Heart right ventricle (tissue), 16 donors: ENCODE measurements at regions of chr16 and their contacts with region 1.

Region 1: DNA sequence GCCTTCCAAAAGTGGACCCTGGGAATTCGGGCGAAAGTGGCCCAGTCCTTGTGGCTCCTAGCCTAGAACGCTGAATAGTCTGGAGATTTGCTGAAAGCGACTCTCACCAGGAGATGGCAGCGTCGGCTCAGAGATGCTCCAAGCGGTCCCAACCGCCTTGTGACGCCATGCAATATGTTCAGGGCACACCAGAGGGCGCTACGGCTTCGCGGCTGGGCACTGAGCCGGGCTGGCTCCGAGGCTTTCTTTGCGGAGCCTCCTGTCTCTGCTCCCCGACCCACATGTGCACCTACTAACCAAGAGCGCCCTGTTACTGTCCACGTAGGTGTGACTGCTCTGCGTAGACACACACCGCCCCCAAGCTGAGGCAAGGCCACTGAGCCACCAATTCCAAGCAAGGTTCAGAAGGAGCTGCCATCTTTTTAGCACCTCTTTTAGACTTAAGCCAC is 36.9 kb downstream of the SYCE1L start:
- DNase-seq: peak; percentile 84 to 85
- ATAC-seq: peak; percentile 93 to 98 (median 98)
- H3K4me3 ChIP-seq: peak overlapping the region in 1 of 10 donors; percentile 14
- H3K27ac ChIP-seq: no peak overlapping the region
- H3K4me1 ChIP-seq: peaks cover 0 to 4% (median 0%) of the 10 kb centered on the region in 9 donors
- H3K27me3 ChIP-seq: peaks cover 0 to 12% (median 9%) of the 10 kb centered on the region in 7 donors
- CTCF ChIP-seq: peak in 8 of 9 donors; percentile 97 to 100 (median 99)

Region 2: GRCh38 chr16:77584205-77584859 is 348.2 kb after region 1 on chr16:
- intact Hi-C with region 1: loop called (anchors 1 to 5 kb)
- DNase-seq: peak in 1 of 2 donors; percentile 35
- ATAC-seq: peak in 6 of 8 donors; percentile 45 to 71 (median 52)
- H3K4me3 ChIP-seq: no peak overlapping the region
- H3K27ac ChIP-seq: peak overlapping the region in 2 of 10 donors; percentile 4 to 6
- H3K4me1 ChIP-seq: peaks cover 0 to 30% (median 3%) of the 10 kb centered on the region in 9 donors
- H3K27me3 ChIP-seq: peaks cover 0 to 33% (median 6%) of the 10 kb centered on the region in 7 donors
- CTCF ChIP-seq: peak; percentile 80 to 92 (median 89)

Region 3: DNA sequence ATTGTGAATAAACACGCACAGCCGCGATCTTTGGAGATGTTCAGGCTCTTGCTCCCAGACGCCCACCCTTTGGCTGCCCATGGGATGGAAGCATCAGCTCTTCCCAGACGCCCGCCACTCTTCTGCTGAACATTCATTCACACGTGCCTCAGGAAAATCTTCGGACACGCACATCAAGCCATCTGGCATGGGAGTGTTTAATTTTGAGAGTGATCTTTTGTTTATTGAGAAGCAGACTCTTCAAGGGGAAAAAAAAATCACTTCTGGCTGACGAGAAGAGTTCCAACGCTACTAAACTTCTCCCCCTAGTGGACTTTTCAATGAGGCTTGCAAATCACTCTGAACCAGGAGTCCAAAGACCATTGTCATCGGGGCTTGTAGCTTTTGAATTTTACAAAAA is 424.2 kb after region 1 on chr16:
- intact Hi-C with region 1: loop called in 9 of 10 experiments (anchors 1 to 10 kb)
- DNase-seq: no peak
- ATAC-seq: peak in 1 of 8 donors; percentile 47
- H3K4me3 ChIP-seq: no peak overlapping the region
- H3K27ac ChIP-seq: no peak overlapping the region
- H3K4me1 ChIP-seq: peaks cover 0 to 2% (median 0%) of the 10 kb centered on the region in 9 donors
- H3K27me3 ChIP-seq: peaks cover 0 to 29% (median 8%) of the 10 kb centered on the region in 7 donors
- CTCF ChIP-seq: peak in 7 of 9 donors; percentile 50 to 70 (median 56)

Region 4: GRCh38 chr16:77963185-77964044 is 727.3 kb after region 1 on chr16:
- intact Hi-C with region 1: loop called in 1 of 10 experiments (anchors 10 kb)
- DNase-seq: no peak
- ATAC-seq: no peak
- H3K4me3 ChIP-seq: no peak overlapping the region
- H3K27ac ChIP-seq: no peak overlapping the region
- H3K4me1 ChIP-seq: peaks cover 0 to 8% (median 0%) of the 10 kb centered on the region in 9 donors
- H3K27me3 ChIP-seq: peaks cover 0 to 30% (median 0%) of the 10 kb centered on the region in 7 donors
- CTCF ChIP-seq: no peak

Region 5: GRCh38 chr16:77971306-77972271 is 735.5 kb after region 1 on chr16:
- intact Hi-C with region 1: loop called in 2 of 10 experiments (anchors 10 kb)
- DNase-seq: peak; percentile 80 to 83
- ATAC-seq: peak; percentile 81 to 92 (median 86)
- H3K4me3 ChIP-seq: no peak overlapping the region
- H3K27ac ChIP-seq: no peak overlapping the region
- H3K4me1 ChIP-seq: no peaks in the 10 kb centered on the region
- H3K27me3 ChIP-seq: peaks cover 0 to 11% (median 0%) of the 10 kb centered on the region in 7 donors
- CTCF ChIP-seq: peak; percentile 71 to 87 (median 82)

Region 6: DNA sequence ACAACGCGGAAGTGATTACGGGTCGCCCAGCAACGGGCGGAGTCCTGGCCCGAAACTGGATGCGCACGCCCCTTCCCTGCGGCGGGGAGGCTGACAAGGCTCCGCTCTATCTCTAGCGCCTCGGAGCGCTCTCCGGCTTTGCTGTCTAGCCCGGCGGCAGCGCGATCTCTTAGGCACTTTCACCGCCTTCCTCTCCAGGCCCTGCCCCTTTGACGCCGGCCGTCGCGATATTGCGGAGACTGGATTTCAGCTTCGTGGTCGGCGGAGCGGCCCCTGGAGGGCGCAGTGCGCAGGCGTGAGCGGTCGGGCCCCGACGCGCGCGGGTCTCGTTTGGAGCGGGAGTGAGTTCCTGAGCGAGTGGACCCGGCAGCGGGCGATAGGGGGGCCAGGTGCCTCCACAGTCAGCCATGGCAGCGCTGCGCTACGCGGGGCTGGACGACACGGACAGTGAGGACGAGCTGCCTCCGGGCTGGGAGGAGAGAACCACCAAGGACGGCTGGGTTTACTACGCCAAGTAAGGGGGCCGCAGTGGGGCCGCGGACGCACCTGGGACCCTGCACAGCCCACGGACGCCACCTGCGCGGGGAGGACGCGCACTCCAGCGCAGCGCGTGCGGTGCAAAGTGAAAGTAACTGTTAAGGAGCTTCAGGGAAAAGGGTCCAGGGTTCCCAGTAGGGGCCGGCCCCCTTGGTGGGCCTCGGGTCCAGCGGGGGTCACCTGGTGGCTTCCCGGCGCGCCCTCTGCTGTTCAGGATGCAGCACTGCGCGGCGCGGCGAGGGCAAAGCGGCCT is 863.5 kb after region 1 on chr16 and contains the start of gene WWOX:
- intact Hi-C with region 1: loop called in 2 of 10 experiments (anchors 10 kb)
- DNase-seq: peak; percentile 95 to 96
- ATAC-seq: peak; percentile 97 to 99 (median 98)
- H3K4me3 ChIP-seq: peak within 1 kb of the TSS; percentile 69 to 100 (median 82)
- H3K27ac ChIP-seq: peak within 1 kb of the TSS; percentile 14 to 92 (median 88)
- H3K4me1 ChIP-seq: peaks cover 3 to 15% (median 8%) of the 10 kb centered on the region in 9 donors
- H3K27me3 ChIP-seq: peaks cover 0 to 8% (median 0%) of the 10 kb centered on the region in 7 donors
- CTCF ChIP-seq: peak; percentile 57 to 89 (median 82)
- total RNA-seq, gene WWOX: 6.1 to 15.0 (median 10.3) TPM